Caco-2 (cell line): ENCODE measurements at regions of chr15 and their contacts with region 1.

Region 1: DNA sequence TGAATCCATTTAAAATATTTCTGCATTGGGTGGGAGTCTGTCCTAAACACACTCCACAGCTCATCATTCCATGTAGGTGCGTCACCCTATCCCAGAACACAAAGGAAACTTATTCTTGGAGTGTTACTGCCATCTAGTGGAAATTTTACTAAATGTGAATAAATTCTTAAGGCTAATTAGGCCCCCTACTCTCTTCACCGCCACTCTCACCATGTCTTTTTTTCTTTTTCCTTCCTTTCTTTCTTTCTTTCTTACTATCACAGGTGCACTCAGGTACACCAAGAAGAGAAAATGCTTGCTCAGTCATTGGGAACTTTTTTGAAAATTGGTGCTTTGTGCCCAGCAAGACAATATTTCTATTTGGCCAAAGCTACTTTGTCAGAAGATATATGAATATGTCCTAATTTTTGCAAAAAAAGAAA is 26.4 kb upstream of the ATP8B4 start:
- DNase-seq: peak in 1 of 2 experiments; percentile 62
- H3K4me3 ChIP-seq: no peak overlapping the region
- H3K4me3 Mint-ChIP-seq: no peak overlapping the region
- H3K27ac Mint-ChIP-seq: no peak overlapping the region
- H3K4me1 ChIP-seq: peaks cover 13% of the 10 kb centered on the region; the same call in 1 of the 2 replicates
- H3K4me1 Mint-ChIP-seq: peaks cover 8% of the 10 kb centered on the region
- H3K27me3 ChIP-seq: no peaks in the 10 kb centered on the region
- H3K27me3 Mint-ChIP-seq: no peaks in the 10 kb centered on the region
- CTCF ChIP-seq: peak; percentile 13 to 50

Region 2: DNA sequence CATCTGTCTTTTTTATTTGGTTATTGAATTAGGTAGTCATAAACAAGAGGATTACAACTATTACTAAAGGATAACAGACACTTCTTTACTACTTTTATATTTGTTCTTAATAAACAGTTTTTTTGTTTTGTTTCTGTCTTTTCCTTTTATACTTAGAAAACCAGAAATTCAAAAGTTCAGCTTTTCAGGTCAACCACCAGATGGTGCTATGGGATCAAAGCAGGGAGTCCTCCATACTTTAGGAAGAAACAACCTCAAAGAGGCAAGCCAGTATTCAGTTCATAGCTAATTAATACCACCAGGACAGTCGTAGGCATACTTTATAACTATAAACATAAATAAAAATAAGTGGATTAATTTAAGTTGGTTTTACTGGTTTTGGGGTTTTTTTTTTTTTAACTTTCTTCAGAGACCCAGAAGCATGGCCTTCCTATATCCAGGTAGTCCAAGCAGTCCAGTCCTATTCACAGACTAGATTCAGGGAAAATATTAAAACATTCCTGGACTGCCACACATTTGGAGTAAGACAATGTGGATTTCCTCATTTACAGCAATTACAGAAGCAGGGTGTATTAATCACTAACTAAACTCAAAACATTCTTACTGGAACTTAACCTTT is 1283.5 kb before region 1 on chr15:
- CTCF ChIA-PET with region 1: interaction called, 4 read pairs
- POLR2A ChIA-PET with region 1: no interaction called
- intact Hi-C with region 1: loop called (anchors 1 kb)
- DNase-seq: peak; percentile 37 to 67
- H3K4me3 ChIP-seq: no peak overlapping the region
- H3K4me3 Mint-ChIP-seq: no peak overlapping the region
- H3K27ac Mint-ChIP-seq: no peak overlapping the region
- H3K4me1 ChIP-seq: no peaks in the 10 kb centered on the region
- H3K4me1 Mint-ChIP-seq: no peaks in the 10 kb centered on the region
- H3K27me3 ChIP-seq: no peaks in the 10 kb centered on the region
- H3K27me3 Mint-ChIP-seq: peaks cover 19% of the 10 kb centered on the region
- CTCF ChIP-seq: peak; percentile 77 to 83

Region 3: GRCh38 chr15:49235446-49236124 is 909.9 kb before region 1 on chr15:
- CTCF ChIA-PET with region 1: no interaction called
- POLR2A ChIA-PET with region 1: no interaction called
- intact Hi-C with region 1: loop called (anchors 1 kb)
- DNase-seq: peak in 1 of 2 experiments; percentile 54
- H3K4me3 ChIP-seq: no peak overlapping the region
- H3K4me3 Mint-ChIP-seq: no peak overlapping the region
- H3K27ac Mint-ChIP-seq: no peak overlapping the region
- H3K4me1 ChIP-seq: peaks cover 8% of the 10 kb centered on the region
- H3K4me1 Mint-ChIP-seq: peaks cover 7% of the 10 kb centered on the region
- H3K27me3 ChIP-seq: no peaks in the 10 kb centered on the region
- H3K27me3 Mint-ChIP-seq: no peaks in the 10 kb centered on the region
- CTCF ChIP-seq: peak; percentile 49 to 56

Region 4: GRCh38 chr15:50003786-50004334 is 141.6 kb before region 1 on chr15:
- CTCF ChIA-PET with region 1: interaction called, 13 read pairs
- POLR2A ChIA-PET with region 1: no interaction called
- intact Hi-C with region 1: loop called (anchors 1 kb)
- DNase-seq: peak; percentile 84 to 87
- H3K4me3 ChIP-seq: no peak overlapping the region
- H3K4me3 Mint-ChIP-seq: no peak overlapping the region
- H3K27ac Mint-ChIP-seq: no peak overlapping the region
- H3K4me1 ChIP-seq: no peaks in the 10 kb centered on the region
- H3K4me1 Mint-ChIP-seq: peaks cover 4% of the 10 kb centered on the region
- H3K27me3 ChIP-seq: no peaks in the 10 kb centered on the region
- H3K27me3 Mint-ChIP-seq: peaks cover 15% of the 10 kb centered on the region
- CTCF ChIP-seq: peak; percentile 79 to 83

Region 5: DNA sequence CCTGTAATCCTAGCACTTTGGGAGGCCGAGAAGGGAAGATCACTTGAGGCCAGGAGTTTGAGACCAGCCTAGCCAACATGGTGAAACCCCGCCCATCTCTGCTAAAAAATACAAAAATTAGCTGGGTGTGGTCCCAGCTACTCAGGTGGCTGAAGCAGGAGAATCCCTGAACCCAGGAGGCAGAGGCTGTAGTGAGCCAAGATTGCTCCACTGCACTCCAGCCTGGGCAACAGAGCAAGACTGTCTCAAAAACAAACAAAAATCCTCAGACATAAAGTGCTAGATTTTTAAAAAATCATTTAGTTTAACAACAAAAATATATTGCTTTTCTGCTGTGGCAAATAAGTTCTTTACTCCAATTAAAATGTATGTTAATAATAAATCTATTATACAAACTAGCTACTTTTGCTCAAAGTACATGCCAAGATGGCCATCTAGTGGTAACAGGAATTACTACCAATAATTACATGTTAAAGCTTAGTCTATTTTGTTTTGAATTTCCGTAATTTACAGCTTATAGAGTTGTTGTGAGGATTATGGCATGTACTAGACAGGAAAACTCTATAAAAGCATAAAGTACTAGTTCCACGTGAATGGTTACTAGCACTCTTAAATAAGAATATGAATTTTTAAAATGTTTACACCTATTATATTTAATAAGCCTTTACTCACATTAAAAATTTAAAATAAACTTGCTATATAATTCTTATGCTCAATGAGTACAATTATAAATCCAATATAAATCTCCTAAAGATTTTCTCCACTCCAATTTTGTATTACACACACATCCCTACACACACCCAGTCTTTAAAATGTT is 170.6 kb after region 1 on chr15:
- CTCF ChIA-PET with region 1: interaction called, 20 read pairs
- POLR2A ChIA-PET with region 1: no interaction called
- intact Hi-C with region 1: loop called (anchors 1 kb)
- DNase-seq: peak in 1 of 2 experiments; percentile 29
- H3K4me3 ChIP-seq: no peak overlapping the region
- H3K4me3 Mint-ChIP-seq: no peak overlapping the region
- H3K27ac Mint-ChIP-seq: no peak overlapping the region
- H3K4me1 ChIP-seq: no peaks in the 10 kb centered on the region
- H3K4me1 Mint-ChIP-seq: no peaks in the 10 kb centered on the region
- H3K27me3 ChIP-seq: no peaks in the 10 kb centered on the region
- H3K27me3 Mint-ChIP-seq: no peaks in the 10 kb centered on the region
- CTCF ChIP-seq: peak; percentile 47 to 77

Region 6: GRCh38 chr15:50340416-50340815 is 195.0 kb after region 1 on chr15:
- CTCF ChIA-PET with region 1: no interaction called
- POLR2A ChIA-PET with region 1: no interaction called
- intact Hi-C with region 1: no loop called
- DNase-seq: no peak
- H3K4me3 ChIP-seq: no peak overlapping the region
- H3K4me3 Mint-ChIP-seq: no peak overlapping the region
- H3K27ac Mint-ChIP-seq: no peak overlapping the region
- H3K4me1 ChIP-seq: peaks cover 14% of the 10 kb centered on the region
- H3K4me1 Mint-ChIP-seq: peaks cover 22% of the 10 kb centered on the region
- H3K27me3 ChIP-seq: no peaks in the 10 kb centered on the region
- H3K27me3 Mint-ChIP-seq: no peaks in the 10 kb centered on the region
- CTCF ChIP-seq: no peak